Heart right ventricle (tissue), 16 donors: ENCODE measurements at regions of chr19 and their contacts with region 1.

Region 1: DNA sequence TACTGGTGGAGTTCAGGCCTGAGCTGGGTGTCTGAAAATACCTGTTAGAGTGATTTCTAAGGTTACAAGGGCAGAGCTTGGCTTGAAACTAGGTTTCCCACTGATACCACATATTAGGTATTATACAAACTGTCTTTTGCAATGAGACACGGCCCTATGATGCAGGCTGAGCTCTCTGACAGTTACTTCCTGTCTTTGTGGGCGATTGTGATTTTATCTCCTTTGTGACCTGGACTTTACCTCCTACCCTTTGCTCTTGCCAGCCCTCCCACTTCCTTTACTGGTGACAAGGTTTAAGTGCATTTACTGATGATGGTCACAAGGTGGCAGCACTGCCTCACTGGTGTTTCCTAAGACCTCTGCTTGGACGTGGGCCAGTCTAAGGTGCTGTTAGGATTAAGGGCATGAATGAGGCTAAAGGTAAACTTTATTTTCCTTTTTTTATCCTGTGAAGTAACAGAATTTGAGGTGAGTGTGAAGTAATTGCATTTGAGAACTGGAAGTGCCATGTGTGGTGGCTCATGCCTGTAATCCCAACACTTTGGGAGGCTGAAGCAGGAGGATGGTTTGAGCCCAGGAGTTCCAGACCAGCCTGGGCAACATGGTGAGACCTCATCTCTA is 7.7 kb upstream of the CXCL17 start:
- DNase-seq: peak; percentile 48 to 84
- ATAC-seq: peak; percentile 81 to 96 (median 91)
- H3K4me3 ChIP-seq: peak overlapping the region in 1 of 10 donors; percentile 7
- H3K27ac ChIP-seq: peak overlapping the region in 9 of 10 donors; percentile 50 to 74 (median 61)
- H3K4me1 ChIP-seq: peaks cover 0 to 33% (median 9%) of the 10 kb centered on the region in 9 donors
- H3K27me3 ChIP-seq: peaks cover 0 to 6% (median 0%) of the 10 kb centered on the region in 7 donors
- CTCF ChIP-seq: peak; percentile 81 to 94 (median 90)

Region 2: GRCh38 chr19:42420055-42420544 is 30.3 kb before region 1 on chr19:
- intact Hi-C with region 1: no loop called
- DNase-seq: peak in 1 of 2 donors; percentile 64
- ATAC-seq: no peak
- H3K4me3 ChIP-seq: no peak overlapping the region
- H3K27ac ChIP-seq: peak overlapping the region in 9 of 10 donors; percentile 55 to 94 (median 91)
- H3K4me1 ChIP-seq: peaks cover 3 to 67% (median 57%) of the 10 kb centered on the region in 9 donors
- H3K27me3 ChIP-seq: peaks cover 0 to 12% (median 0%) of the 10 kb centered on the region in 7 donors
- CTCF ChIP-seq: peak; percentile 34 to 73 (median 56)

Region 3: DNA sequence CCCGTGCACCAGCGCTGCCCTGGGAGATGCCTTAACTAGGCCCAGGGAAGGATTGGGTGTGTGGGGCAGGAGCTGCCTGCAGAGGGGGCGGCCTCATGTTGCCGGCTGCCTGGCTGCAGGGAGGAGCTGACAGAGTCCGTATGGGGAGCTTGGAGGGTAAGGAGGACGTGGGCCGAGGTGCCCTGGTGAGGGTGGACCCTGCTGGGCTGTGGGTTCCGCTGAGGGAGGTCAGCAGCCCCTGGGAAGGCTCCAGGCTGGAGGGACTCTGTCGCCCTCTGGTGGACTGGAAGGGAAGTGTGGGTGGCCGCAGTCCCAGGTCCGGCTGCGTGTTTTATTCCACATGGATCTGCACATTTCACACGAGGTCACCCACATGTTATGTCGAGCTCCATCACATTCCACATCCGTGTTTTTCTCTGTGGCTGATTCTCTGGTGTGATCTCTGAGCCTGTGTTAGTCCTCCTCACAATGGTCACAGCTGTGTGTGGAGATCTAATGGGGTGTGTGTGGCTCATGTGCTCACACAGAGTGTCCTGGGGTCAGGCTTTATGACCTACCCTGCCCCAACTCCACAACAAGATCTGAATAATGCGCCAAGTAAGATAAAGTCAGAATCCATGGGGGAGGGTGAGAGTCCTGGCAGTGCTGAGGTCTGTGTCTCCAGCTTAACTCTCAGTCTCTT is 146.1 kb after region 1 on chr19:
- intact Hi-C with region 1: loop called in 6 of 10 experiments (anchors 5 to 10 kb)
- DNase-seq: peak in 1 of 2 donors; percentile 24
- ATAC-seq: peak in 5 of 8 donors; percentile 41 to 73 (median 50)
- H3K4me3 ChIP-seq: no peak overlapping the region
- H3K27ac ChIP-seq: no peak overlapping the region
- H3K4me1 ChIP-seq: no peaks in the 10 kb centered on the region
- H3K27me3 ChIP-seq: peaks cover 0 to 20% (median 0%) of the 10 kb centered on the region in 7 donors
- CTCF ChIP-seq: peak; percentile 78 to 98 (median 90)